T-cell (primary cell): ENCODE measurements at regions of chr6 and their contacts with region 1.

Region 1: GRCh38 chr6:32933636-32934085 is 7.2 kb downstream of the HLA-DMB start:
- DNase-seq: peak; percentile 35 to 87 (median 70)
- ATAC-seq: peak; percentile 40 to 73 (median 62)
- H3K4me3 ChIP-seq: no peak overlapping the region
- H3K4me3 Mint-ChIP-seq: no peak overlapping the region
- H3K27ac ChIP-seq: no peak overlapping the region
- H3K27ac Mint-ChIP-seq: peak overlapping the region in 1 of 2 donors; percentile 1
- H3K4me1 ChIP-seq: peaks cover 0 to 3% of the 10 kb centered on the region in 2 experiments
- H3K4me1 Mint-ChIP-seq: peaks cover 3 to 18% (median 5%) of the 10 kb centered on the region in 3 donors
- H3K27me3 ChIP-seq: no peaks in the 10 kb centered on the region
- H3K27me3 Mint-ChIP-seq: no peaks in the 10 kb centered on the region

Region 2: GRCh38 chr6:31952140-31952805 is 981.4 kb before region 1 on chr6:
- CTCF ChIA-PET with region 1: no interaction called
- POLR2A ChIA-PET with region 1: no interaction called
- DNase-seq: peak in 5 of 35 experiments; percentile 11 to 51 (median 33)
- ATAC-seq: peak; percentile 42 to 56 (median 48)
- H3K4me3 ChIP-seq: no peak overlapping the region
- H3K4me3 Mint-ChIP-seq: no peak overlapping the region
- H3K27ac ChIP-seq: no peak overlapping the region
- H3K27ac Mint-ChIP-seq: peak overlapping the region in 1 of 2 donors; percentile 9
- H3K4me1 ChIP-seq: no peaks in the 10 kb centered on the region
- H3K4me1 Mint-ChIP-seq: peaks cover under 1 to 4% (median 2%) of the 10 kb centered on the region in 3 donors
- H3K27me3 ChIP-seq: no peaks in the 10 kb centered on the region
- H3K27me3 Mint-ChIP-seq: no peaks in the 10 kb centered on the region

Region 3: DNA sequence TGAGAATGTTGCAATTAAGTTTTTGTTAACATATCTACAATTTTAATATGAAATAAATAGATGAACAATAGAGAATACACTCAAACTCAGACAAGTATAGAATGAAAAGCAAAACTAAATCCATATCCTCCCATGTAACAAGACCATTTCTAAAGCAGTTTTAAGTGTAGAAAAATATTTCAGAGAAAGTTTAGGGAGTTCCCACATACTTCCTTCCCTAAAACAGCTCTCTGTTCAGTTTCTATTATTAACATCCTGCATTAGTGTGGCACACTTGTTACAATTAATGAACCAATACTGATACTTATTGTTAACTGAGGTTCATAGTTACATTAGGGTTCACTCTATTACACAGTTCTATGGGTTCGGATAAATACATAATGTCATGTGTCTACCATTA is 442.0 kb before region 1 on chr6:
- CTCF ChIA-PET with region 1: no interaction called
- POLR2A ChIA-PET with region 1: no interaction called
- DNase-seq: no peak
- ATAC-seq: no peak
- H3K4me3 ChIP-seq: no peak overlapping the region
- H3K4me3 Mint-ChIP-seq: no peak overlapping the region
- H3K27ac ChIP-seq: no peak overlapping the region
- H3K27ac Mint-ChIP-seq: no peak overlapping the region
- H3K4me1 ChIP-seq: no peaks in the 10 kb centered on the region
- H3K4me1 Mint-ChIP-seq: no peaks in the 10 kb centered on the region
- H3K27me3 ChIP-seq: no peaks in the 10 kb centered on the region
- H3K27me3 Mint-ChIP-seq: peaks cover 1 to 6% of the 10 kb centered on the region in 2 donors

Region 4: GRCh38 chr6:32845384-32845884 is 88.2 kb before region 1 on chr6:
- CTCF ChIA-PET with region 1: no interaction called
- POLR2A ChIA-PET with region 1: no interaction called
- DNase-seq: peak in 31 of 35 experiments; percentile 11 to 65 (median 36)
- ATAC-seq: peak; percentile 4 to 12 (median 9)
- H3K4me3 ChIP-seq: peak overlapping the region; percentile 97 to 98
- H3K4me3 Mint-ChIP-seq: peak overlapping the region; percentile 98 to 100 (median 100)
- H3K27ac ChIP-seq: peak overlapping the region; percentile 100
- H3K27ac Mint-ChIP-seq: peak overlapping the region; percentile 100
- H3K4me1 ChIP-seq: peaks cover 53 to 77% of the 10 kb centered on the region in 2 experiments
- H3K4me1 Mint-ChIP-seq: peaks cover 77 to 94% (median 81%) of the 10 kb centered on the region in 3 donors
- H3K27me3 ChIP-seq: no peaks in the 10 kb centered on the region
- H3K27me3 Mint-ChIP-seq: no peaks in the 10 kb centered on the region

Region 5: GRCh38 chr6:32885698-32886286 is 47.9 kb before region 1 on chr6:
- CTCF ChIA-PET with region 1: interaction called, 7 to 18 read pairs
- POLR2A ChIA-PET with region 1: no interaction called
- DNase-seq: peak in 1 of 35 experiments; percentile 86
- ATAC-seq: peak; percentile 34 to 70 (median 64)
- H3K4me3 ChIP-seq: no peak overlapping the region
- H3K4me3 Mint-ChIP-seq: no peak overlapping the region
- H3K27ac ChIP-seq: no peak overlapping the region
- H3K27ac Mint-ChIP-seq: no peak overlapping the region
- H3K4me1 ChIP-seq: no peaks in the 10 kb centered on the region
- H3K4me1 Mint-ChIP-seq: peaks cover 0 to 4% (median 0%) of the 10 kb centered on the region in 3 donors
- H3K27me3 ChIP-seq: no peaks in the 10 kb centered on the region
- H3K27me3 Mint-ChIP-seq: no peaks in the 10 kb centered on the region

Region 6: GRCh38 chr6:32947552-32948465 is 14.1 kb after region 1 on chr6:
- CTCF ChIA-PET with region 1: interaction called, 13 to 96 read pairs
- POLR2A ChIA-PET with region 1: interaction called in 1 of 2 experiments, 3 read pairs
- DNase-seq: peak in 18 of 35 experiments; percentile 13 to 75 (median 31)
- ATAC-seq: peak in 2 of 4 experiments; percentile 32 to 37
- H3K4me3 ChIP-seq: no peak overlapping the region
- H3K4me3 Mint-ChIP-seq: no peak overlapping the region
- H3K27ac ChIP-seq: no peak overlapping the region
- H3K27ac Mint-ChIP-seq: peak overlapping the region in 1 of 2 donors; percentile 32
- H3K4me1 ChIP-seq: peaks cover 28 to 55% of the 10 kb centered on the region in 2 experiments
- H3K4me1 Mint-ChIP-seq: peaks cover 48 to 76% (median 52%) of the 10 kb centered on the region in 3 donors
- H3K27me3 ChIP-seq: no peaks in the 10 kb centered on the region
- H3K27me3 Mint-ChIP-seq: no peaks in the 10 kb centered on the region

Region 7: DNA sequence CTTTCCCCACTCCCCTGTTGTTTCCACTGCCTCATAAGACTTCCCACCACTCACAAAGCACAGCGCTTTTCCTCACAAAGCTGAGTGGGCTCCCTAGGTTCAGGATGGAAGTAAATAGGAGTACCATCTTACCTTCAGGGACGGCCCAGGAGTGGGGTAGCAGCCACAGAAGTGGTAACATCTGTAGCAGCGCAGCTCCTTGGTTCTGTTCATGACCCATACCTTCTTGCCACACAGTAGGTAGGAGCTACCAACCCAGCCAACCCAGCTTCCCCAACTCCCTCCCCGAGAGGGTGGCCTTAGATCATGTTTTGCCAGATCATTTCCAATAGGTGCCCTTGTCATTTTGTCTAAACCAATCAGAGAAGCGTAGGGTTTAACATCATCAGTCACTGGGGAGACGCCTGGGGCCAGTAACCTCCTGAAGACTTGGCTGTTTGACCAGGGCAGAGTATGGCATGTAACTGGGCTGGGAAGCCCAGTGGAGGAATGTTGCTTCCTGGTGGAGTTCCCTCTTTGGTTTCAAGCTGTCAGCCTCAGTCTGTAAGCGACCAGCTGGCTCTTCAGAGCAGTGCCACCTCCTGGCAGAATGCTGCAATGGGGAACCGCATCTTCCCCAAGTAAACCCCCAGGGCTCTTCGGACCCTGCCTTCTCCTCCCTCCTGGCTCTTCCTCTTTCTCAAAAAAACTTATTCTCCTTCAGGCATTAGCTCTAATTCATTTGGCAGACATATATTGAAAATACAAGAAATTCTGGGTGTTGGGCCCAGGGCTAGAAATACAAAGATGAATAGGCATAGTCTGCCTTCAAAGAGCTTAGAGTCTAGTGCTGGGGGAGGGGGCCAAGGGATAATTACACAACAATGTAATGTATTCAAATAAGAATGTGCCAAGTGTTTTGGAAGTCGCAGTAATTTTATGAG is 19.4 kb after region 1 on chr6 and contains the start of gene HLA-DMA:
- CTCF ChIA-PET with region 1: interaction called, 13 to 96 read pairs
- POLR2A ChIA-PET with region 1: interaction called in 1 of 2 experiments, 3 read pairs
- DNase-seq: peak; percentile 57 to 89 (median 73)
- ATAC-seq: peak; percentile 97 to 99 (median 98)
- H3K4me3 ChIP-seq: peak within 1 kb of the TSS; percentile 38 to 65
- H3K4me3 Mint-ChIP-seq: peak within 1 kb of the TSS; percentile 66 to 82 (median 82)
- H3K27ac ChIP-seq: peak within 1 kb of the TSS; percentile 35
- H3K27ac Mint-ChIP-seq: peak within 1 kb of the TSS; percentile 83 to 91
- H3K4me1 ChIP-seq: peaks cover 9 to 41% of the 10 kb centered on the region in 2 experiments
- H3K4me1 Mint-ChIP-seq: peaks cover 41 to 59% (median 43%) of the 10 kb centered on the region in 3 donors
- H3K27me3 ChIP-seq: no peaks in the 10 kb centered on the region
- H3K27me3 Mint-ChIP-seq: no peaks in the 10 kb centered on the region
- total RNA-seq, gene HLA-DMA: 22.3 to 37.8 (median 27.5) TPM

Region 8: GRCh38 chr6:32984605-32985389 is 51.1 kb after region 1 on chr6:
- CTCF ChIA-PET with region 1: interaction called, 19 to 124 read pairs
- POLR2A ChIA-PET with region 1: interaction called in 1 of 2 experiments, 7 read pairs
- DNase-seq: peak; percentile 70 to 95 (median 88)
- ATAC-seq: peak; percentile 76 to 88 (median 86)
- H3K4me3 ChIP-seq: no peak overlapping the region
- H3K4me3 Mint-ChIP-seq: no peak overlapping the region
- H3K27ac ChIP-seq: no peak overlapping the region
- H3K27ac Mint-ChIP-seq: peak overlapping the region; percentile 50 to 83
- H3K4me1 ChIP-seq: peaks cover 0 to 9% of the 10 kb centered on the region in 2 experiments
- H3K4me1 Mint-ChIP-seq: peaks cover 23 to 35% (median 26%) of the 10 kb centered on the region in 3 donors
- H3K27me3 ChIP-seq: no peaks in the 10 kb centered on the region
- H3K27me3 Mint-ChIP-seq: no peaks in the 10 kb centered on the region

Region 9: DNA sequence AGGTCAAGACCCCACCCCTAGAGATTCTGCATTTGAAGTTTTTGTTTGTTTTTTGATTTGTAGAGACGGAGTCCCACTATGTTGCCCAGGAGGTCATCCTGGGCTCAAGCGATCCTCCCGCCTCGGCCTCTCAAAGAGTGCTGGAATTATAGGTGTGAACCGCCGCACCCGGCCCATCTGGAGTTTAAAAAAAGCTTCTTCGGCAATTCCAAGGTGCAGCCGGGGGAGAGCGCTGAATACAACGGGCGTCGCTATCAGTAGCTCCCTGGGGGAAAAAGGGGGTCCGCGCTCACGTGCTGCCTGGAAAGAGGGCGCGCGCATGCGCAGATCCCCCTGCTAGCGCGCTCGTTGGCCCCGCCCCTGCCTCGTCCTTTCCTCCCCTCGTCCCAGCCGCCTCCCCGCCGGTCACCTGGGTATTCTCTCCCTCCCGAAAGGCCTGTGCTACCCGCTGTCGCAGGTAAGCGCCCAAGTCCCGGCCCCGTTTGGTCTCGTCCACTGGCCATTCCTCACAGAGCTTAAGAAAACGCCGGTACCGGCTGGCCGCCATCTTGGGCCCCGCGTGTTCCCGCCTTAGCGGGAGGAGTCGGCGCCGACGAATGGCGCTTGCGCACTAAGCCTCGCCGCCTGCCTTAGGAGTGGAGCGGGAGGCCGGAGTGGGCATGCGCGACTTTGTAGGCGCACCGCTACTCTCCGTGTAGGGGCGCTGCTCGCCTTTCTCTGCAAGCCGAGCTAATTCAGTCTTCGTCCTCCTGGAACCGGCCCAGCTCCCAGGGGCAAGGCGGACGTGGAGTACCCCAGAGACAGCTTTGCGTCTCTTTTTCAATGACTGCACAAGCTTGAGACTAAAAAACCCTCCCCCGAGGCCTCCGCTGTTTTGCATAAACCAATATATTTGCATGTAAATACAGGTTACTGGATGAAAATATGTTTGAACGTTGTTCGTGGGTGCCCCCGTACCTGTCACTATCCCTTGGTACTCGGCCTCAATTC is 777.8 kb after region 1 on chr6 and contains the start of gene UQCC2:
- CTCF ChIA-PET with region 1: no interaction called
- POLR2A ChIA-PET with region 1: no interaction called
- DNase-seq: peak; percentile 93 to 100 (median 96)
- ATAC-seq: peak; percentile 94 to 96 (median 94)
- H3K4me3 ChIP-seq: peak within 1 kb of the TSS; percentile 87 to 95
- H3K4me3 Mint-ChIP-seq: peak within 1 kb of the TSS; percentile 96 to 98 (median 98)
- H3K27ac ChIP-seq: peak within 1 kb of the TSS; percentile 66
- H3K27ac Mint-ChIP-seq: peak within 1 kb of the TSS; percentile 95 to 98
- H3K4me1 ChIP-seq: peaks cover 15 to 22% of the 10 kb centered on the region in 2 experiments
- H3K4me1 Mint-ChIP-seq: peaks cover 25 to 35% (median 27%) of the 10 kb centered on the region in 3 donors
- H3K27me3 ChIP-seq: no peaks in the 10 kb centered on the region
- H3K27me3 Mint-ChIP-seq: no peaks in the 10 kb centered on the region
- total RNA-seq, gene UQCC2: 17.2 to 36.2 (median 32.7) TPM